ENCODE measurements at regions of chr16 and their contacts with region 1.

Region 1: DNA sequence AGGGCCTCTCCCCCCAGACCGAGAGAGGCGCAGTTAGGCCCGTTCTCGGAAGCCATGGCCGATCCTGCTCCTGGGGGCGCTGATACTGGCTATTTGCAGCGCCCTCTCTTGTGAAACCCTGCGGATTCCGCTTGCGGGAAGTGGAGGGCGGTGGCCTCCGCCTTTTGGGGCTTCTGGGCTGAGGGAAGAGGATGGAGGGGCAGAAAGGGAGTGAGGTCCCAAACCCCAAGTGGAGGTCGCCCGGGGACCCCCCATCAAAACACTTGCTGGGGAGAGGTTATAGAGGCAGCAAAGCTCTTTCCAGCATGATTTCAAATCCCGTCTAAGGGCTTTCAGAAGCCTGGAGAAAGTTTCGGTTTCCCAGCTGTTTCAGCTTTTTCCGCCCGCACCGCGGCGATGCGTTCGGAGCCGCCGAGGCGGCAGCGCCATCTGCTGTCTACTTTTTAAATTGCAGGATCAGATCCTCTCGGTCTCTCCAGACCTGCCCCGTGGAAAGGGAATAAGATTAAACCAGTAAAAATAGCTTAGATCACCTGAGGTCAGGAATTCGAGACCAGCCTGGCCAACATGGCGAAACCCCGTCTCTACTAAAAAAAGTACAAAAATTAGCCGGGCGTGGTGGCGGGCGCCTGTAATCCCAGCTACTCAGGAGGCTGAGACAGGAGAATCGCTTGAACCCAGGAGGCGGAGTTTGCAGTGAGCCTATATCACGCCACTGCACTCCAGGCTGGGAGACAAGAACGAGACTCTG is 15.8 kb downstream of the SNX20 start:
- DNase-seq: peak; percentile 87
- H3K4me3 Mint-ChIP-seq: peak overlapping the region; percentile 63
- H3K27ac Mint-ChIP-seq: peak overlapping the region; percentile 33
- H3K4me1 Mint-ChIP-seq: peaks cover 39% of the 10 kb centered on the region
- H3K27me3 Mint-ChIP-seq: no peaks in the 10 kb centered on the region

Region 2: GRCh38 chr16:50326949-50327402 is 338.3 kb before region 1 on chr16:
- CTCF ChIA-PET with region 1: interaction called, 44 read pairs
- POLR2A ChIA-PET with region 1: no interaction called
- intact Hi-C with region 1: no loop called
- DNase-seq: peak; percentile 81
- H3K4me3 Mint-ChIP-seq: no peak overlapping the region
- H3K27ac Mint-ChIP-seq: peak overlapping the region; percentile 45
- H3K4me1 Mint-ChIP-seq: peaks cover 59% of the 10 kb centered on the region
- H3K27me3 Mint-ChIP-seq: no peaks in the 10 kb centered on the region

Region 3: DNA sequence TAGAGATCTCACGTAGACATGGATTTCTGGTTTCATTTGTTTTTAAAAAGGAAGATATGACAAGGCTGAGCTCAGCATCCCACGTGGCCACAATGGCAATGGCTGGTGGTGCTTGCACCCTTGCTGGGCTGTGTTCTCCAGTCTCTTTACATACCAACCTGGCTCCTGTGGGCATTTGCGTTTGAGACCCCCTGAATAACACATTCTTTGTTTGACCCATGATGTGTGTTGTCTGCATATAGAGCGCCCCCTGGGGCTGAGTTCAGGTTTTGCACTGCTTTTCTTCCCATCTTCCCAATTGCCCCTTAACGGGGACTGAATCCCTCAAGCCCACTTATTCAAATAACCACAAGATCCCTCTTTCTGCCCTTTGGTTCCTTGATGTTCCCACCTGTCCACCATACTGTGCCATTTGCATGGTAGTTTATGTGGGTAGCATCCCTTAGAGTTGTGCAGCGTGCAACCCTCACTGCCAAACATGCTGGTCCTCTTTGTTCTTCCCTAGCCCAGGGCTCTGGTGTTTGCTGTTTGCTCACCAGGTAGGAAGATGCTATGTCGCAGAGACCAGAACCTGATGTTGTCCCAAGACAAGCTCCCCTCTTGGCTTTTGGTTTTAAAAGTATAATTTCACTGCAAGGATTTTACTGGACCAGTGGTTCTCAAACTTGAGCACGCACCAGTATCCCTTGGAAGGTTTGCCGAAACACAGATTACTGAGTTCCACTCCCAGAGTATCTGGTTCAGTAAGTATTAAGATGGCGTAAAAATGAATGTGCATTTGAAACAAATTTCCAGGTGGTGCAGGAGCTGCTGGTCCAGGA is 155.6 kb before region 1 on chr16:
- CTCF ChIA-PET with region 1: interaction called, 13 read pairs
- POLR2A ChIA-PET with region 1: no interaction called
- intact Hi-C with region 1: no loop called
- DNase-seq: peak; percentile 66
- H3K4me3 Mint-ChIP-seq: no peak overlapping the region
- H3K27ac Mint-ChIP-seq: no peak overlapping the region
- H3K4me1 Mint-ChIP-seq: no peaks in the 10 kb centered on the region
- H3K27me3 Mint-ChIP-seq: no peaks in the 10 kb centered on the region

Region 4: DNA sequence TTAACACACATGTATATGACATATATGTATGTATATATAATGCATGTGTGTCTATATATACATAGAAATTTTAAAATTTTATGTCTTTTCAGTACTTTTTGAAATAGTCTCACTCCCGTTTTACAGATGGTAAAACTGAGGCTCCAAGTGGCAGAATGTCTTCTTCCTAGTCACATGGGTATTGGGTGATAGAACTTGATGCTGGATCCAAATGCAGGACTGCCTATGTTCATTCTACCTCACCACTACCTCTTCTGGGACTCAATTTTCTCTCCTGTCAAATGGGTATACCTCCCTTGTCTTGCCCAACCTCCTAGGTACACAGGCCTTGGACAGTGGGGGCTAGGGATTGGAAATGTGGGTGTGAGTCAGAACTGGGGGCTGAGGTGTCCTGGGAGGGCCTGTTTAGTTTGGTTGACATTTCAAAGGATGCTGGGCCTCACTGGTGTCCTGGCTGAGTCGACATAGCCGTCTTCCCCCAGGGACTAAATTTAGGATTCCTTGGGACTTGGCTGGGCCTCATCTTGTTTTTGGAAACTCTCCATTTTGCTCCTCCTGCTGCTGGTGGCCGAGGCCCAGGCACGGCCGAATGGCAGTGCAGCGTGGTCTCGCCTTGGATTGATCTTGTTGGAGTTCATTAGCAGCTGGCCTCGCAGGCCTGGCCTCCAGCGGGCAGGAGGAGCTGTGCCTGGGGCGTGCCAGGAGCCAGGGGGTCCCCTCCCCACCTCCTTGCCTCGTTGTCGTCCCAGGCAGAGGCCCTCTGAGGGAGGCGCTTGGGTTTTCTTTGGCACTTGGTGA is 91.2 kb before region 1 on chr16:
- CTCF ChIA-PET with region 1: no interaction called
- POLR2A ChIA-PET with region 1: no interaction called
- intact Hi-C with region 1: no loop called
- DNase-seq: no peak
- H3K4me3 Mint-ChIP-seq: no peak overlapping the region
- H3K27ac Mint-ChIP-seq: no peak overlapping the region
- H3K4me1 Mint-ChIP-seq: no peaks in the 10 kb centered on the region
- H3K27me3 Mint-ChIP-seq: no peaks in the 10 kb centered on the region

Region 5: GRCh38 chr16:50696575-50697420 is 31.5 kb after region 1 on chr16:
- CTCF ChIA-PET with region 1: interaction called, 60 read pairs
- POLR2A ChIA-PET with region 1: interaction called, 5 read pairs
- intact Hi-C with region 1: no loop called
- DNase-seq: peak; percentile 90
- H3K4me3 Mint-ChIP-seq: peak overlapping the region; percentile 78
- H3K27ac Mint-ChIP-seq: peak overlapping the region; percentile 98
- H3K4me1 Mint-ChIP-seq: peaks cover 89% of the 10 kb centered on the region
- H3K27me3 Mint-ChIP-seq: no peaks in the 10 kb centered on the region

Region 6: GRCh38 chr16:50747207-50747956 is 82.1 kb after region 1 on chr16:
- CTCF ChIA-PET with region 1: interaction called, 153 read pairs
- POLR2A ChIA-PET with region 1: interaction called, 6 read pairs
- intact Hi-C with region 1: loop called (anchors 1 kb)
- DNase-seq: no peak
- H3K4me3 Mint-ChIP-seq: peak overlapping the region; percentile 73
- H3K27ac Mint-ChIP-seq: peak overlapping the region; percentile 97
- H3K4me1 Mint-ChIP-seq: peaks cover 64% of the 10 kb centered on the region
- H3K27me3 Mint-ChIP-seq: no peaks in the 10 kb centered on the region